Heart right ventricle (tissue), 16 donors: ENCODE measurements at regions of chr10 and their contacts with region 1.

Region 1: GRCh38 chr10:31864834-31865518 is 63.7 kb downstream of the ARHGAP12 start:
- DNase-seq: no peak
- ATAC-seq: peak in 5 of 8 donors; percentile 16 to 54 (median 51)
- H3K4me3 ChIP-seq: peak overlapping the region in 6 of 10 donors; percentile 0 to 16 (median 12)
- H3K27ac ChIP-seq: peak overlapping the region in 6 of 10 donors; percentile 10 to 27 (median 18)
- H3K4me1 ChIP-seq: peaks cover 0 to 44% (median 20%) of the 10 kb centered on the region in 9 donors
- H3K27me3 ChIP-seq: no peaks in the 10 kb centered on the region
- CTCF ChIP-seq: no peak

Region 2: DNA sequence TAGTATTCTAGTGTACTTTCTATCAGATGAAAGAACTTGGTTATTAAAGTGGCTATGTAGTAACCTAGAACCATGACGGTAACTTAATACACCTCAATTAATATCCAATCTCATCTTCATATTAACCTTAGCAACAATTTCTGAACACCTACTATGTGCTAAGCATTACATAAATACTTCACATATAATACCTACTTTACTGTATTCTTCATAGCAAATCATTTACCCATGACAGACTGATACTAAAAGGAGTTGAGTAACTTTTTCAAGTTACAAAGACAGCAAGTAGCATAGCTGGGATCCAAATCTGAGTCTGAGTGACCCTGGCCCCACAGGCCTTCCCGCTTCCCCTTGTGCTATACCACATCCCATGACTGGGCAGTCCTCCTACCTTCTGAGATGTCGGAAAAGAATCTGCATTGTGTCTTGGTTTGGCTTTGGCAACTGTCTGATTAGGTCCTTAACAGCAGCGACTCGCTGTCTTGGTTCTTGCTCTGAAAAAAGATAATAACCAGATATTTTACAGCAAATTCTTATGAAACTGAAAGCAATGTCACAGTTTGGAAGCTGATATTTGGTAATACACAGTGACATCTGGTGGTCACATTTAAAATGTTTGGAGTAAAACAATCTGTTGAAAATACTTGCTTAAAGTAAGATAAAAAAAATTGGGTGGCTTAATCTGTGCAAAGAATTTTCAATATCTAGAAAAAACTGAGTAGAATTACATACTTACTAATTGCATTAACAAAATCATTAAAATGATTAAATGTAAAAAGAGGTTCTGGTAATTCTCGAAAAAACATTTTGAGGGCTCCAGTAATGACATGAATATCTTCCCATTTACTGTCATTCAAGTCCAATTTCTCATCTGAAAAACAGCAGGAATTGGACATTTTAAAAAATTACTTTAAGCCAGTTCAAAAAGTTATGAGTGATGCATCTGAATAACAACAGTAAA is 56.4 kb before region 1 on chr10:
- intact Hi-C with region 1: no loop called
- DNase-seq: peak in 1 of 2 donors; percentile 39
- ATAC-seq: peak in 7 of 8 donors; percentile 75 to 90 (median 82)
- H3K4me3 ChIP-seq: peak overlapping the region in 9 of 10 donors; percentile 26 to 55 (median 47)
- H3K27ac ChIP-seq: peak overlapping the region; percentile 25 to 86 (median 77)
- H3K4me1 ChIP-seq: peaks cover 0 to 22% (median 11%) of the 10 kb centered on the region in 9 donors
- H3K27me3 ChIP-seq: no peaks in the 10 kb centered on the region
- CTCF ChIP-seq: peak; percentile 38 to 78 (median 66)

Region 3: DNA sequence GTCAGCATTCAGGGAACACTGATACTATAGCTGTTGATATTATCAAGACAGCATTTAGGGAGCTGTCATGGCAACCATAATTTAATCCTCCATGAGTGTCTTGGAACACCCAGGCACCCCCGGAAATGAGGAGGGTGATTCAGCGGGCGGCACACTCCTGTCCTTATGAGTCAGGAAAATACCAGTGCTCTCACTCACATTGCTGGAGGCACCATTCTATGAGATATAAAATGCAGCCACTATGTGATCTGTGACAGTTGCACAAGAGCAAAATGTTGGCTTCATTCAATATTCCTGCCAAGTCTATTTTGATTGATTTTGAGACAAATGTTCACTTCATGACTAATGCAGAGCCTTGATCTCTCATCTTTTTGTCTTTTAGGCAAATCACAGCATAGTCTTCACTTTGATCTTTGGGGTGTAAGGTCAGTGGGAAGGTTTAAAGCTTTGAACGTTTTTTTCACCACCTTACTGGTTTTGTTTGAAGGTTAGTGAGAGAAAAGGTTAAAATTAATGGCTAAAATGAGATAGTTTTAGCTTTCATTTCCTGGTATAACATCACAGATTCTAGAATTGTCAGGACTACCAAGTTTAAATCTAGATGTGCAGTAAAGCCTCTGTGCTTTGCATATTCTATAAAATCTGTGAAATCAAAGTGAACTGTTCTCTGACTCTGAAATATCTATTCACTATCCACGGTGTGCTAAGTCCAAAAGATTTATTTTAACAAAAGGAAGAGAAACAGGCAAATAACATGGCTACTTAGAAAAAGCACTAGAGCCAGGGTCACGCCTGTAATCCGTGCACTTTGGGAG is 76.1 kb after region 1 on chr10:
- intact Hi-C with region 1: loop called in 7 of 10 experiments (anchors 2 to 10 kb)
- DNase-seq: no peak
- ATAC-seq: peak in 1 of 8 donors; percentile 39
- H3K4me3 ChIP-seq: no peak overlapping the region
- H3K27ac ChIP-seq: no peak overlapping the region
- H3K4me1 ChIP-seq: peaks cover 0 to 11% (median 0%) of the 10 kb centered on the region in 9 donors
- H3K27me3 ChIP-seq: no peaks in the 10 kb centered on the region
- CTCF ChIP-seq: no peak

Region 4: DNA sequence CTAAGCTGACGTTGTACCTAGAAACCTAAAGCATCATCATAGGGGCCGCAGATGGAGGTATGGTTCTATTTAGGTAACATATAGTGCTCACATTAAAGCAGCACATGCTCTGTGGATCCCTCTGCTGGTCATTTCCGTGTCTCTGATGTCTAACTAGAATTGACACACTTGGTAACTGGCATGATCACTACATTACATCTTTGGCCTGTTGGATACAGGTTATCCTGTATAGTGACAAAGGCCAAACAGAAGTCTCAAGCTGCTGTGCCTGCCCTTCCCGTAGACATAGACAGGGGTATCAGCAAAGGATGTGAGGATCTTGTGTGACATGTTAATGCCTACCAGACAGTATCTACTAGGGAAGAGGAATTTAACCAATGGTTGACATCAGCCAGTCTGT is 140.1 kb after region 1 on chr10:
- intact Hi-C with region 1: loop called in 9 of 10 experiments (anchors 2 to 10 kb)
- DNase-seq: no peak
- ATAC-seq: peak in 7 of 8 donors; percentile 34 to 64 (median 47)
- H3K4me3 ChIP-seq: no peak overlapping the region
- H3K27ac ChIP-seq: no peak overlapping the region
- H3K4me1 ChIP-seq: peaks cover 0 to 23% (median 8%) of the 10 kb centered on the region in 9 donors
- H3K27me3 ChIP-seq: no peaks in the 10 kb centered on the region
- CTCF ChIP-seq: peak in 8 of 9 donors; percentile 19 to 58 (median 50)

Region 5: GRCh38 chr10:32207544-32207943 is 342.6 kb after region 1 on chr10:
- intact Hi-C with region 1: loop called in 2 of 10 experiments (anchors 5 to 10 kb)
- DNase-seq: peak; percentile 24 to 34
- ATAC-seq: peak in 3 of 8 donors; percentile 55 to 61 (median 58)
- H3K4me3 ChIP-seq: no peak overlapping the region
- H3K27ac ChIP-seq: no peak overlapping the region
- H3K4me1 ChIP-seq: no peaks in the 10 kb centered on the region
- H3K27me3 ChIP-seq: no peaks in the 10 kb centered on the region
- CTCF ChIP-seq: peak; percentile 36 to 72 (median 65)